ENCODE measurements at regions of chr3 and their contacts with region 1.

Region 1: GRCh38 chr3:170414202-170414663 is 4.4 kb upstream of the CLDN11 start:
- DNase-seq: peak; percentile 49 to 63
- ATAC-seq: peak; percentile 62 to 84; a peak in 5 of 6 replicates
- H3K4me3 ChIP-seq: no peak overlapping the region
- H3K27ac ChIP-seq: no peak overlapping the region
- H3K4me1 ChIP-seq: no peaks in the 10 kb centered on the region
- CTCF ChIP-seq: peak; percentile 96
- EP300 ChIP-seq: no peak
- POLR2A ChIP-seq: no peak
- RAD21 ChIP-seq: peak; percentile 97 to 98

Region 2: DNA sequence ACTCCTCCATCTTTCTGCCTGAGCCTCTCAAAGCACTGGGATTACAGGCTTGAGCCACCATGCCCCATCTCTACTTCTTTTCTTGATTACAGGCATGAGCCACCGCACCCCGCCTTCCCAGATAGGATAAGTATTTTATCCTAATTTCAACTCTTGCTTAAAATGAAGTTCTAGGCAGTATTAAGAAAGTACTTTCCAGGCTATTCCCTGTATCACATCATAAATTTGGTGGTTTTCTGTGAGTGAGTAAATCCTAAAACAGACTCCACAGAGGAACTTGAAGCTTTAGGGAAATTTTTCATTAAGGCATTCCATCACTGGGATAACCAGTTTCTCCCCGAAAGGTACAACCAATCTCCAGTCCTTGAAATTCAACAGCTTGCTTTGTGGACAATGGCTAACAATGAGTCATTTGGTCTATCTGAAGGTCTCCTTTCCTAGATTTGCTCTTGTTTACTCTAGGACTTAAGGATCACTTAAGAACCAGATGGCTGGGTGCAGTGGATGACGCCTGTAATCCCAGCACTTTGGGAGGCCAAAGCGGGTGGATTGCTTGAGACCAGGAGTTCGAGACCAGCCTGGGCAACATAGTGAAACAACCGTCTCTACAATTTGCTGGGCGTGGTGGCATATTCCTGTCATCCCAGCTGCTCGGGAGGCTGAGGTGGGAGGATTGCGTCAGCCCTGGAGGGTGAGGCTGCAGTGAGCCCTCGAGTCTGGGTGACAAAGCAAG is 106.4 kb before region 1 on chr3:
- CTCF ChIA-PET with region 1: interaction called, 57 read pairs
- POLR2A ChIA-PET with region 1: no interaction called
- DNase-seq: peak; percentile 35 to 84
- ATAC-seq: peak; percentile 55 to 72; a peak in 3 of 6 replicates
- H3K4me3 ChIP-seq: no peak overlapping the region
- H3K27ac ChIP-seq: peak overlapping the region; percentile 42 to 74; a peak in 4 of 6 replicates
- H3K4me1 ChIP-seq: peaks cover 34% of the 10 kb centered on the region
- CTCF ChIP-seq: no peak
- EP300 ChIP-seq: no peak
- POLR2A ChIP-seq: no peak
- RAD21 ChIP-seq: no peak

Region 3: DNA sequence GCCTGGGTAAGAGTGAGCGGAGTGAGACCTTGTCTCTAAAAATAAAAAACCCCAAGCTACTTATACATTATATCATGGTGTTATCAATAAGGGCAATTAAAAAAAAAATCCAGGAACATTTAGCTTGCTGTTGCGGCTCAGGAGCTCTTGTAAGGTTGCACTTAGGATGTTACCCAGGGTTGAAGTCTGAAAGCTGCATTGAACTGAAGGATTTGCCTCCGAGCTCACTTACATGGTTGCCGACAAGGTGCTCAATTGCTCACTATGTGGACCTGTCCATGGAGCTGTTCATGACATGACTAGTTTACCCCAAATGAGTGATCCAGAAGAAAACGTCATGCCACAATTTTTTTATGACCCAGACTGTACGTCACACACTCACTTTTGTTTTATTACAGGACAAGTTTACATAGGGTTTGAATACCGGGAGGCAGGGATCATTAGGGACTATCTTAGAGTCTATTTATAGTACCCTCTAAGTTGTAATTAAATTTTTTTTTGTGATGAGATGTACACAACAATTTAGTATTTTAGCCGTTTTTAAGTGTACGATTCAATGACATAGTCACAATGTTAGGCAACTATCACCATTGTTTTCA is 16.6 kb before region 1 on chr3:
- CTCF ChIA-PET with region 1: interaction called, 30 read pairs
- POLR2A ChIA-PET with region 1: no interaction called
- DNase-seq: peak in 1 of 2 experiments; percentile 22
- ATAC-seq: peak; percentile 27 to 39; a peak in 5 of 6 replicates
- H3K4me3 ChIP-seq: no peak overlapping the region
- H3K27ac ChIP-seq: no peak overlapping the region
- H3K4me1 ChIP-seq: peaks cover 4% of the 10 kb centered on the region; the same call in 1 of the 3 replicates
- CTCF ChIP-seq: no peak
- EP300 ChIP-seq: no peak
- POLR2A ChIP-seq: no peak
- RAD21 ChIP-seq: no peak

Region 4: GRCh38 chr3:170431054-170431453 is 16.8 kb after region 1 on chr3:
- CTCF ChIA-PET with region 1: interaction called, 15 read pairs
- POLR2A ChIA-PET with region 1: no interaction called
- DNase-seq: no peak
- ATAC-seq: no peak
- H3K4me3 ChIP-seq: no peak overlapping the region
- H3K27ac ChIP-seq: no peak overlapping the region
- H3K4me1 ChIP-seq: no peaks in the 10 kb centered on the region
- CTCF ChIP-seq: no peak
- EP300 ChIP-seq: no peak
- POLR2A ChIP-seq: no peak
- RAD21 ChIP-seq: no peak

Region 5: GRCh38 chr3:170689893-170690660 is 275.8 kb after region 1 on chr3:
- CTCF ChIA-PET with region 1: interaction called, 10 read pairs
- POLR2A ChIA-PET with region 1: no interaction called
- DNase-seq: peak; percentile 38 to 53
- ATAC-seq: peak; percentile 73 to 94; a peak in 4 of 6 replicates
- H3K4me3 ChIP-seq: no peak overlapping the region
- H3K27ac ChIP-seq: peak overlapping the region in 1 of 2 experiments; percentile 46; a peak in 3 of 6 replicates
- H3K4me1 ChIP-seq: peaks cover 15% of the 10 kb centered on the region
- CTCF ChIP-seq: peak; percentile 49
- EP300 ChIP-seq: no peak
- POLR2A ChIP-seq: no peak
- RAD21 ChIP-seq: peak; percentile 47 to 51; a peak in 4 of 5 replicates

Measured in A549 (cell line).